ENCODE measurements at regions of chr4 and their contacts with region 1.

Region 1: DNA sequence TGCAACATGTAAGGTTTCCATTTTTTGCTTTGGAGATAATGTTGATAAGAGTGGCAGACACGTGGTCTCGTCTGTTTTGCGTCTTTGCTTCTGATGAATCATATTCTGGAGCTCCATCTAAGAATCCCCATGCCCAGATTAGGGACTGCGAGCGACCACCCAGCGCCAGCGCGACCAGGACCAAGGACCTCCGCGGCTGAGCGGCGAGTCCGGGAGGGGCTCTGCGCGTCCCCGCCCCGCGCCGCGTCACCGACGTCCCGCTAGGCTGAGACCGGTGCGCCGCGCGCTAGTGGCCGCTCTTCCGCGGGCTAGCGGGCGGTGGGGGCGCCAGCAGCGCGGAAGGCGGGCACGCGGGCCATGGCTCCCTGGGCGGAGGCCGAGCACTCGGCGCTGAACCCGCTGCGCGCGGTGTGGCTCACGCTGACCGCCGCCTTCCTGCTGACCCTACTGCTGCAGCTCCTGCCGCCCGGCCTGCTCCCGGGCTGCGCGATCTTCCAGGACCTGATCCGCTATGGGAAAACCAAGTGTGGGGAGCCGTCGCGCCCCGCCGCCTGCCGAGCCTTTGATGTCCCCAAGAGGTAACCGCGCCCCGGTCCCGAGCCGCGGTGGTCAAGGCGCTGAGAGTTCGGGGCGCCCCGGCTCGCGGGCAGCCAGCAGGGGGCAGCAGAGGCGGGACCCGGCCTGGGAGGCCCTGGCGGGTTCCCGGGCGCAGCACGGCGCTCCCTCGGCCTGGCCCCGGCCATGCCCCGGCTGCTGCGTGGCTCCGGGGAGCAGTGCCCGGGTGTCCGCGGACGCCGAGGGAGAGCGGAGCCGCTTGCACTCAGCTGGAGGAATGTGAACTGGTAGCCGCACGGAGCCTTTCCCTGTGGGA is at the start of gene SRD5A3:
- DNase-seq: peak; percentile 82 to 95
- H3K4me3 ChIP-seq: peak within 1 kb of the TSS; percentile 55
- H3K4me3 Mint-ChIP-seq: peak within 1 kb of the TSS; percentile 84
- H3K27ac Mint-ChIP-seq: peak within 1 kb of the TSS; percentile 93
- H3K4me1 ChIP-seq: peaks cover 9% of the 10 kb centered on the region; the same call in 1 of the 2 replicates
- H3K4me1 Mint-ChIP-seq: peaks cover 22% of the 10 kb centered on the region
- H3K27me3 ChIP-seq: no peaks in the 10 kb centered on the region
- H3K27me3 Mint-ChIP-seq: no peaks in the 10 kb centered on the region
- CTCF ChIP-seq: peak; percentile 71 to 84
- total RNA-seq, gene SRD5A3: 22.6 and 26.9 TPM in 2 replicates

Region 2: DNA sequence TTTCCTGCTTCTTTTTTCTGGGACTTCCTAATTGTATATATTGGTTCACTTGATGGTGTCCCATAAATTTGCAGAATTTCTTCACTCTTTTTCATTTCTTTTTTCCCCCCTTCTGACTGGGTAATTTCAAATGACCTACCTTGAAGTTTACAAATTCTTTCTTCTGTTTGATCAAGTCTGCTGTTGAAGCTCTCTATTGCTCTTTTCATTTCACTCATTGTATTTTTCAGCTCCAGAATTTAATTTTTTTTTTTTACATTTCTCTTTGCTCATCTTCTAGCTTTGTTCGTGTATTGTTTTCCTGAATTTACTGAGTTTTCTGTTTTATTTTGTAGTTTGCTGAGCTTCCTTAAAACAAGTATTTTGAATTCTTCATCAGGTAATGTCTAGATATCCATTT is 61.9 kb before region 1 on chr4:
- CTCF ChIA-PET with region 1: no interaction called
- POLR2A ChIA-PET with region 1: no interaction called
- intact Hi-C with region 1: no loop called
- DNase-seq: no peak
- H3K4me3 ChIP-seq: no peak overlapping the region
- H3K4me3 Mint-ChIP-seq: no peak overlapping the region
- H3K27ac Mint-ChIP-seq: no peak overlapping the region
- H3K4me1 ChIP-seq: no peaks in the 10 kb centered on the region
- H3K4me1 Mint-ChIP-seq: no peaks in the 10 kb centered on the region
- H3K27me3 ChIP-seq: no peaks in the 10 kb centered on the region
- H3K27me3 Mint-ChIP-seq: peaks cover 3% of the 10 kb centered on the region
- CTCF ChIP-seq: no peak

Region 3: DNA sequence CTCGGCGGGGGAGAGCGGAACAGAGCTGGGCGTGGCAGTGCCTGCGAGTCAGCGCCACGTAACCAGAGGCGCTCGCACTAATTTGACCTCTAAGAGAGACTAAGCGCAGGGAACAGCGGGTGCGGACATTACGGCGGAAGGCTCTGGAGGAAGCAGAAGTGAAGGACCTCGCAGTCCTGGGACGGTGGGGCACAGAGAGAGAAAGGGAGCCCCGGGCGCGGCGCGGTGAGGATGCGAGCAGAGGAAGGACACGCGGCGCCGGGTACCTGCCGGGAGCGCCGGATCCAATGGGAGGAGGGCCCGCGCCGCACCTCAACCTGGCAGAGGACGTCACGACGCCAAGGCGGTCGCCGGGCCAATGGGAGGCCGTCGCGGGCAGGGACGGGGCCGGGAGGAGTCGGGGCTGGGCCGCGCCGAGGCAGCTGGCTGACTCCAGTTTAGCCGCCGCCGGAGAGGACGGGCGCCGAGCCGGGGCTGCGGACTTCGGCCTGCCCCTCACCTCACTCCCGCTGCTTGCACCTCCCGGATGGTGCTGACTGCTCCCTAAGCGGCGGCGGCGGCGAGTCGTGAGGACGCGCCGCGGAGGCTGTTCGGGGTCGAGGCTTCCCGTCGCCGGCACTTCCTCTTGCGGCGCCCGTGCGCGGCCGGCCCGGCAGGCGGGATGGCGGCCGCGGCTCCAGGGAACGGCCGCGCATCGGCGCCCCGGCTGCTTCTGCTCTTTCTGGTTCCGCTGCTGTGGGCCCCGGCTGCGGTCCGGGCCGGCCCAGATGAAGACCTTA is 49.5 kb after region 1 on chr4 and contains the start of gene TMEM165:
- CTCF ChIA-PET with region 1: interaction called, 4 read pairs
- POLR2A ChIA-PET with region 1: no interaction called
- intact Hi-C with region 1: loop called (anchors 2 kb)
- DNase-seq: peak; percentile 91 to 95
- H3K4me3 ChIP-seq: peak within 1 kb of the TSS; percentile 89
- H3K4me3 Mint-ChIP-seq: peak within 1 kb of the TSS; percentile 91
- H3K27ac Mint-ChIP-seq: peak within 1 kb of the TSS; percentile 94
- H3K4me1 ChIP-seq: peaks cover 8% of the 10 kb centered on the region; the same call in 1 of the 2 replicates
- H3K4me1 Mint-ChIP-seq: peaks cover 24% of the 10 kb centered on the region
- H3K27me3 ChIP-seq: no peaks in the 10 kb centered on the region
- H3K27me3 Mint-ChIP-seq: no peaks in the 10 kb centered on the region
- CTCF ChIP-seq: no peak
- total RNA-seq, gene TMEM165: 90.4 and 91.9 TPM in 2 replicates

Region 4: GRCh38 chr4:55435141-55435841 is 89.1 kb after region 1 on chr4:
- CTCF ChIA-PET with region 1: no interaction called
- POLR2A ChIA-PET with region 1: no interaction called
- intact Hi-C with region 1: loop called (anchors 2 kb)
- DNase-seq: no peak
- H3K4me3 ChIP-seq: no peak overlapping the region
- H3K4me3 Mint-ChIP-seq: no peak overlapping the region
- H3K27ac Mint-ChIP-seq: no peak overlapping the region
- H3K4me1 ChIP-seq: peaks cover 48% of the 10 kb centered on the region
- H3K4me1 Mint-ChIP-seq: peaks cover 22% of the 10 kb centered on the region
- H3K27me3 ChIP-seq: no peaks in the 10 kb centered on the region
- H3K27me3 Mint-ChIP-seq: no peaks in the 10 kb centered on the region
- CTCF ChIP-seq: no peak